ENCODE measurements at regions of chr5 and their contacts with region 1.

Region 1: GRCh38 chr5:159100025-159100781 is 487 bp upstream of the EBF1 start:
- DNase-seq: peak; percentile 93
- H3K4me3 ChIP-seq: peak overlapping the region; percentile 94
- H3K27ac ChIP-seq: peak overlapping the region; percentile 90
- H3K4me1 ChIP-seq: peaks cover 50% of the 10 kb centered on the region
- CTCF ChIP-seq: no peak

Region 2: DNA sequence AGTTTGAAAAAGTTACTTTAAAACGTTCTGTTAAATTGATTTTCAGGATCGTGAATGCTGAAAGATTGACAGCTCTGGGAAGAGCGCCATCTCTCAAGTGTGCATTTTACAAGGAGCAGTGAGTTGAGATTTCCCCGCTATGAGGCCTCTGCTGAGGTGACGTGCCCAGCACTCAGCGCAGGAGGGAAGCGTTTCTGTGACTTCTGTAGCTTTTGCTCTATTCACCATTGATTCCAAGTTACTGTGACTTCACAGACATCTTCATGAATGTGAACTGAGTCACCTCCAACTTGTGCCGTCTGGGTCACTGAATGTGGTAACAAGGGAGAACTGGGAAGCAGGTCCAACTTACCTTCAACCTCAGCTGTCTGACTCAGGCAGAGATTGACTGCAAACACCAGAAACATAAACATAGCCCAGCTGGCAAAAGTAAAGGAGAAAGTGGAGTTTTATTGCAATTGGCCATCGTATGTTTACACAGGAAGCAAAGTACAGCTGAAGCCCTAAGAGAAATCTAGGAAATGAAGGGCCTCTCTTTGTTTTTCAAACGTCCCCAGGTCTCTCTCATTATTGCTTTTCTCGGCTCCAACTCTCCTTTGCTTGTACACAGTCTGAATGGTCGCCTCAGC is 812.4 kb before region 1 on chr5:
- CTCF ChIA-PET with region 1: no interaction called
- POLR2A ChIA-PET with region 1: no interaction called
- intact Hi-C with region 1: loop called (anchors 5 kb)
- DNase-seq: no peak
- H3K4me3 ChIP-seq: no peak overlapping the region
- H3K27ac ChIP-seq: no peak overlapping the region
- H3K4me1 ChIP-seq: peaks cover 22% of the 10 kb centered on the region
- CTCF ChIP-seq: no peak

Region 3: GRCh38 chr5:158751961-158752655 is 348.1 kb before region 1 on chr5:
- CTCF ChIA-PET with region 1: no interaction called
- POLR2A ChIA-PET with region 1: no interaction called
- intact Hi-C with region 1: loop called (anchors 1 kb)
- DNase-seq: peak; percentile 91
- H3K4me3 ChIP-seq: peak overlapping the region; percentile 57
- H3K27ac ChIP-seq: peak overlapping the region; percentile 99
- H3K4me1 ChIP-seq: peaks cover 83% of the 10 kb centered on the region
- CTCF ChIP-seq: no peak

Region 4: GRCh38 chr5:158812408-158812807 is 287.8 kb before region 1 on chr5:
- CTCF ChIA-PET with region 1: interaction called, 3 read pairs
- POLR2A ChIA-PET with region 1: interaction called, 14 read pairs
- intact Hi-C with region 1: no loop called
- DNase-seq: peak; percentile 99
- H3K4me3 ChIP-seq: peak overlapping the region; percentile 57
- H3K27ac ChIP-seq: peak overlapping the region; percentile 94
- H3K4me1 ChIP-seq: peaks cover 96% of the 10 kb centered on the region
- CTCF ChIP-seq: no peak

Region 5: GRCh38 chr5:158875272-158875679 is 224.9 kb before region 1 on chr5:
- CTCF ChIA-PET with region 1: no interaction called
- POLR2A ChIA-PET with region 1: interaction called, 4 read pairs
- intact Hi-C with region 1: loop called (anchors 2 kb)
- DNase-seq: peak; percentile 57
- H3K4me3 ChIP-seq: peak overlapping the region; percentile 60
- H3K27ac ChIP-seq: peak overlapping the region; percentile 92
- H3K4me1 ChIP-seq: peaks cover 74% of the 10 kb centered on the region
- CTCF ChIP-seq: no peak

Region 6: DNA sequence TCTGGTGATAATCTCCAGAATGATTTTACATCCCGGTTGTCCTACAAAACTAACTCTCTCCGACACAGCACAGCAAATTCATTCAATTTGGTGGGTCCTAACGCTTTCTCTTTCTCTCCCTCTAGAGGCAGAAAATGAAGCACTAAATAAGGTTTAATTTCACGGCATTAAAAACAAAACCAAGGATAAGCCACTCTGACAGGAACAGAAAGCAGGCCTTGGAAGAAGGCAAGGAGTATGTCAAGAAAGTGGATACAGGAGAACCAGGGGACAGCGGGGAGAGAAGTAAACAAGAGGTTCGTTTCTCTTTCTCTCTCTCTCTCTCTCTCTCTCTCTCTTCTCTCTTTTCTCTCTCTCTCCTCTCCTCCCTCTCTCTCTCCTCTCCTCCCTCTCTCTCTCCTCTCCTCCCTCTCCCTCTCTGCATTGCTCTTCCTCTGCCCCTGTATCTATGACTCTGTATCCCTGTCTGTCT is 50.3 kb before region 1 on chr5:
- CTCF ChIA-PET with region 1: no interaction called
- POLR2A ChIA-PET with region 1: interaction called, 9 read pairs
- intact Hi-C with region 1: loop called (anchors 2 kb)
- DNase-seq: peak; percentile 51
- H3K4me3 ChIP-seq: peak overlapping the region; percentile 50
- H3K27ac ChIP-seq: peak overlapping the region; percentile 86
- H3K4me1 ChIP-seq: peaks cover 86% of the 10 kb centered on the region
- CTCF ChIP-seq: peak; percentile 81

Region 7: GRCh38 chr5:159083548-159084452 is 16.4 kb before region 1 on chr5:
- CTCF ChIA-PET with region 1: no interaction called
- POLR2A ChIA-PET with region 1: no interaction called
- intact Hi-C with region 1: no loop called
- DNase-seq: no peak
- H3K4me3 ChIP-seq: no peak overlapping the region
- H3K27ac ChIP-seq: no peak overlapping the region
- H3K4me1 ChIP-seq: peaks cover 13% of the 10 kb centered on the region
- CTCF ChIP-seq: no peak

Measured in OCI-LY7 (cell line).